Activated naive CD4-positive, alpha-beta T cell treated with anti-CD3 and anti-CD28 coated beads for 36 hours (primary cell): ENCODE measurements at regions of chr19 and their contacts with region 1.

Region 1: GRCh38 chr19:35269421-35270117 is 807 bp downstream of the USF2 start:
- DNase-seq: peak; percentile 86
- H3K4me3 Mint-ChIP-seq: peak overlapping the region; percentile 70
- H3K27ac Mint-ChIP-seq: peak overlapping the region; percentile 66
- H3K4me1 Mint-ChIP-seq: peaks cover 28% of the 10 kb centered on the region
- H3K27me3 Mint-ChIP-seq: no peaks in the 10 kb centered on the region

Region 2: DNA sequence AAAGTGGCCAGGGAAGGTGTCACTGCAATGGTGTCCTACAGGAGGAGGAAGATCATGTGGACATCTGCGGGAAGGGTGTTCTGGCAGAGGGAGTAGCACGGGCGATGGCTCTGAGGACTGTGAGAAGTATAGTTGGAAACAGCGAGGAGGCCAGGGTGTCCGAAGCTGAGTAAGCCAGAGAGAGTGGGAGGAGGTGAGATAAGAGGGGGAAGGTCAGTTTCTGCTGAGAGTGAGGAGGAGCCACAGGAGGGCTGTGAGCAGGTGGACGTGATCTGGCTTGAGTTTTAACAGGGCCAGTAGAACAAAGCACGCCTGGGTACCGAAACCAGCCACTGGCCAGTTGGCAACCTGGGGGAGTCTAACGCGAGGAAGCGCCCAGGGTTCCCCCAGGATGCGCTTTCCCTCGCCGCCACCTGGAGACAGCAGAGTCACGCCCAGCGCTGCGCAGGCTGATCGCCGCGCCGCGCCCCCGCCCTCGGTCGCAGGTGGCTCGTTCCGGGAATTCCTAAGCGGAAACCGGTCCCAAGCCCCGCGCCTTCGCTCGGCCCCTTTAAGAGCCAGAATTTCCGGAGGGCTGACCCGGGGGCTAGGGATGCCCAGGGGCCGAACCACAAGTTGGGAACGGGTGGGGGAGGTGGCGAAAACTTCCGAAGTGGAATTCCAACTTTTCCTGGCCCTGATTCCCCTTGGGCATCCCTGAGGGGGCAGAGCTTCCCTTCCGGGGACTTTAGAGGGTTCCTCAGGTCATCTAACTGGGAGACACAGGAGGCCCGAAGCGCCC is 21.9 kb before region 1 on chr19:
- CTCF ChIA-PET with region 1: no interaction called
- intact Hi-C with region 1: loop called (anchors 1 kb)
- DNase-seq: peak; percentile 76
- H3K4me3 Mint-ChIP-seq: peak overlapping the region; percentile 86
- H3K27ac Mint-ChIP-seq: peak overlapping the region; percentile 90
- H3K4me1 Mint-ChIP-seq: peaks cover 13% of the 10 kb centered on the region
- H3K27me3 Mint-ChIP-seq: no peaks in the 10 kb centered on the region